IMR-90 (cell line): ENCODE measurements at regions of chr16 and their contacts with region 1.

Region 1: GRCh38 chr16:1194665-1195392 is 30.2 kb downstream of the TPSG1 start:
- DNase-seq: no peak
- ATAC-seq: peak; percentile 76
- H3K4me3 ChIP-seq: no peak overlapping the region
- H3K27ac ChIP-seq: no peak overlapping the region
- H3K4me1 ChIP-seq: no peaks in the 10 kb centered on the region
- H3K27me3 ChIP-seq: no peaks in the 10 kb centered on the region
- CTCF ChIP-seq: peak; percentile 71
- POLR2A ChIP-seq: no peak
- RAD21 ChIP-seq: peak; percentile 86

Region 2: GRCh38 chr16:714558-715476 is 480.0 kb before region 1 on chr16 and contains the start of gene METRN:
- CTCF ChIA-PET with region 1: no interaction called
- POLR2A ChIA-PET with region 1: no interaction called
- dilution Hi-C with region 1: no loop called
- in situ Hi-C with region 1: no loop called
- intact Hi-C with region 1: no loop called
- DNase-seq: peak; percentile 78
- ATAC-seq: peak; percentile 83
- H3K4me3 ChIP-seq: peak within 1 kb of the TSS; percentile 70
- H3K27ac ChIP-seq: no peak within 1 kb of the TSS; the same call in 1 of the 2 replicates
- H3K4me1 ChIP-seq: peaks cover 14% of the 10 kb centered on the region
- H3K27me3 ChIP-seq: no peaks in the 10 kb centered on the region
- CTCF ChIP-seq: no peak
- POLR2A ChIP-seq: no peak
- RAD21 ChIP-seq: no peak
- total RNA-seq, gene METRN: 6.1 and 8.6 TPM in 2 replicates

Region 3: DNA sequence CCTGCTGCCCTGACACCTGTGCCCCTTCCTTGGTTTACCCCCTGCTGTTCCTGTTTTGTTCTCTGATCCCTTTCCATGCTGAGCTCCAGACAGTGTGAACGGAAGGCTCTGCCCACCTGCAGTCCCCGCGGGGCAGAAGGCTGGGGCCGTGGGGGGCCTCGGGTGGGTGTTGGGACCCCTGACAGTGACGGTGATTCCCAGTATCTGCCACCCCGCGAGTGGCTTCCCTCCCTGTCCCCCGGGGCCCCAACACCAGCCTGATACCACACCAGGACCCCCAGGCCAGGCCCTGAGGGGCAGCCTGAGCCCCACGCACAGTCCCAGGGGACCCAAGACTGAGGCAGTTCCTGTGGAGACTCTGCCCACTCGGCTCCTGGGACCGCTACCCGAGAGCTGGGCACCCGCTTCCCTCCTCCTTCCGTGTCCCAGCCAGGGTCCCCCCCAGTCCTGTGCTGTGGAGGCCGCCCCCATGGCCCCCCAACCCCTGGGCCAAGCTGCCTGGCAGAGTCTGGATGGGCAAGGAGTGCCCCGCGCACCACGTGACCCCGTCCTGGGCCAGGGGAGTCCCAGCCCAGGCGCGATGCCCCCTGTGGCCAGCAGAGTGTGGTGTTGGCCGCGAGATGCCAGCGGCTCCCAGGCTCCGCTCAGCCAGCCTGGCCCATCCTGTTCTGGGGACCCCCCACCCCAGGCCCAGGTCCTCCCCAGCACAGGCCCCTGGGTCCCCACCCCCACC is 88.8 kb before region 1 on chr16:
- CTCF ChIA-PET with region 1: no interaction called
- POLR2A ChIA-PET with region 1: no interaction called
- dilution Hi-C with region 1: no loop called
- in situ Hi-C with region 1: loop called (anchors 5 kb)
- intact Hi-C with region 1: loop called (anchors 1 kb)
- DNase-seq: peak; percentile 33
- ATAC-seq: peak; percentile 94
- H3K4me3 ChIP-seq: no peak overlapping the region
- H3K27ac ChIP-seq: no peak overlapping the region
- H3K4me1 ChIP-seq: 0 out of 2 replicates have a peak, but pooled peaks cover 2% of the 10 kb centered on the region
- H3K27me3 ChIP-seq: peaks cover 47% of the 10 kb centered on the region
- CTCF ChIP-seq: peak; percentile 96
- POLR2A ChIP-seq: 0 out of 2 replicates have a peak, but pooled peaks have one; percentile 29
- RAD21 ChIP-seq: peak; percentile 98

Region 4: DNA sequence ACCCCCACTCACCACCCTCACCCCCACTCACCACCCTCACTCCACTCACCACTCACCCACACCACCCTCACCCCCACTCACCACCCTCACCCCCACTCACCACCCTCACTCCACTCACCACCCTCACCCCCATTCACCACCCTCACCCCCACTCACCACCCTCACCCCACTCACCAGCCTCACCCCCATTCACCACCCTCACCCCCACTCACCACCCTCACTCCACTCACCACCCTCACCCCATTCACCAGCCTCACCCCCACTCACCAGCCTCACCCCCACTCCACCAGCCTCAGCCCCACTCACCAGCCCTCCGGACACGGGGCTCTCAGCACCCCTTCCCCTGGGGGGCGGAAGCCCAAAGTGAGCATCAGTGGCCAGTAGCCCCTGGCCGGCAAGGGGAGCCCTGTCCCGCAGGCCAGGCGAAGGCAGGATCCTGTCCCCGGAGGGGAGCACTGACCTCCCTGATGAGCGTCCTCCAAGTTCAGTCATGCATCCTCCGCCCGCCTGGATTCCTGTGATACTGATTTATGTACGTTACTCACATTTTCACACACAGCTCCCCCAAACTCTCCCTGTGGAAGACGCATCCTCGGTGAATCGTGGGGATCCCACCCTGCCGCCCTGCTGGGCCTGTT is 80.8 kb before region 1 on chr16:
- CTCF ChIA-PET with region 1: no interaction called
- POLR2A ChIA-PET with region 1: no interaction called
- dilution Hi-C with region 1: no loop called
- in situ Hi-C with region 1: loop called (anchors 5 kb)
- intact Hi-C with region 1: no loop called
- DNase-seq: no peak
- ATAC-seq: no peak
- H3K4me3 ChIP-seq: no peak overlapping the region
- H3K27ac ChIP-seq: no peak overlapping the region
- H3K4me1 ChIP-seq: no peaks in the 10 kb centered on the region
- H3K27me3 ChIP-seq: peaks cover 45% of the 10 kb centered on the region
- CTCF ChIP-seq: no peak
- POLR2A ChIP-seq: no peak
- RAD21 ChIP-seq: no peak